Activated CD4-positive, alpha-beta T cell treated with anti-CD3 and anti-CD28 coated beads, Interleukin-2, amount 10 ng/mL, durations not matched to agents 24 days and 14 days (primary cell): ENCODE measurements at regions of chr2 and their contacts with region 1.

Region 1: DNA sequence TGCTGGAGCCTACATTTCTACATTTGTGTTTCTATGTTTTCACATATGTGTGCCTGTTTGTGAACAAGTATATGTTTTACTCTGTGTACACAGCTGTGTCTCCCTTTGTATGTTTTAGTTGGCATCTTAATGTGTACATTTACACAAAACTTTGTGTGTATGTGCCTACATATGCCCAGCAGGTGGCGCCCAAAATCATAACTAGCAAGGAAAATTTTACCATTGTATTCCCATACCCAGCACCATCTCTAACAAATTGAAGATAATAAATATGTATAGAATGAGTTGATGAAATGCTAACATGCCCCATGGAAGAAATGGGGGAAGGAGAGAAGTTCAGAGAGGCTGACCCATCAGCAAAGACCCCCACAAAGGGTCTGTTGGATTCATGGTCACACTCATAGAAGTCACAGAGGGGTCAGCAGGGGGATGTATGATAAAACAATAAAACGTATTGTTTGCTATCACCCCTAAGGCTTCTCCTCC is 48.1 kb downstream of the PKDCC start:
- DNase-seq: peak; percentile 90
- H3K4me3 Mint-ChIP-seq: no peak overlapping the region
- H3K27ac Mint-ChIP-seq: no peak overlapping the region
- H3K4me1 Mint-ChIP-seq: peaks cover 36% of the 10 kb centered on the region
- H3K27me3 Mint-ChIP-seq: peaks cover 26% of the 10 kb centered on the region

Region 2: GRCh38 chr2:42117923-42118753 is 22.2 kb after region 1 on chr2:
- intact Hi-C with region 1: no loop called
- DNase-seq: no peak
- H3K4me3 Mint-ChIP-seq: peak overlapping the region; percentile 6
- H3K27ac Mint-ChIP-seq: peak overlapping the region; percentile 23
- H3K4me1 Mint-ChIP-seq: peaks cover 30% of the 10 kb centered on the region
- H3K27me3 Mint-ChIP-seq: peaks cover 2% of the 10 kb centered on the region

Region 3: DNA sequence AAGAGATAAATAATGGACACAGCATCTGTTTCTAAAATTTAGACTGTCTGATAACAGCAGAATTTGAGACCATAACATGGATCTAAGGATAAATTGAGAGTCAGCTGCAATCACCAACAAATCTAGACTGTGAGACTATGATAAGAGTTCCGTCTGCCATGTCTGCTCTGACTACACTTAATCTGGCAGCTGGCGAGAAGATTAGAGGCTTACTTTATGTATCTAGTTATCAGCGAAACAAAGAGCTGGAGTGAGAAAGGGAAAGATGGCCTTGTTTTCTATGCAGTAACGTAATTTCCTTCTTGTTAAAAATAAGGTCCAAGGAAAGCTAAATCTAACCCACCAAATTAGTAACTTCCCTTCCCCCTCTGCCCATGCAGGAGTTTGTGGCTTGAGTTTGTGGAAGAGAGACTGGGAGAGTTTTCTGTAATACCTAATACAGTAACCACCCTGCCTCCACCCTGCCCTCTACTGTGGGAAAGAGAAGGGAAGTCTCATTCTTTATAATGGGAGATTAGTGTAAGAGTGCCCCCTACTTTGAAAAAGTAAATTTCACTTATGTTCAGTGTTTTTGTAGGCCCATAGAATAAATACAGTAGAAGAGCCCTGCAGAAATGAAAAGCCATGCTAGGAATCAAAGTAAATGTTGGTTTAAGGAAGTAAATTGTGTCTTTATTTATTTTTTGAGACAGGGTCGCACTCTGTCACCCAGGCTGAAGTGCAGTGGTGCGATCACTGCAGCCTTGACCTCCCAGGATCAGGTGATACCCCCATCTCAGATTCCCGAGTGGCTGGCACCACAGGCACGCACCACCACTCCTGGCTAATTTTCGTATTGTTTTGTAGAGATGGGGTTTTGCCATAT is 100.7 kb after region 1 on chr2:
- intact Hi-C with region 1: loop called (anchors 1 kb)
- DNase-seq: peak; percentile 80
- H3K4me3 Mint-ChIP-seq: no peak overlapping the region
- H3K27ac Mint-ChIP-seq: no peak overlapping the region
- H3K4me1 Mint-ChIP-seq: peaks cover 50% of the 10 kb centered on the region
- H3K27me3 Mint-ChIP-seq: no peaks in the 10 kb centered on the region

Region 4: DNA sequence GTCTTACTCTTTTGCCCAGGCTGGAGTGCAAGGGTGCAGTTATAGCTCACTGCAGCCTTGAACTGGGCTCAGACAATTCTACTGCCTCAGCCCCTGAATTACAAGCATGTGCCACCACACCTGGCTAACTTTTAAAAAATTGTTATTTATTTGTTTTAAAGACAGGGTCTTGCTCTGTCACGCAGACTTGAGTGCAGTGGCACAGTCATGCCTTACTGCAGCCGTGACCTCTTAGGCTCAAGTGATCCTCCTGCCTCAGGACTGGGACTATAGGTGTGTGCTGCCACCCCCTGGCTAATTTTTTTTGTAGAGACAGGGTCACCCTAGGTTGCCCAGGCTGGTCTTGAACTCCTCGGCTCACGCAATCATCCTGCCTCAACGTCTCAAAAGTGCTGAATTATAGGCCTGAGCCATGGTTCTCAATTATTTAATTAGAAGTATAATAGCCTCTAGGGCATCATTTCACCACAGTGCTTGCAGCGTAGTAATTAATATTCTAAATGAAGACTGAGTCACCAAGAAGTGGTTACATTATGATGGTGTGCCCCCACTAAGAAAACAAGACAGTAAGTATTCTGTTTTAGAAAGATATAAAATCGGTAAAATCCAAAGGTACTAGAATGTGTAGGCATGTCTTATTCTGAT is 142.8 kb after region 1 on chr2:
- intact Hi-C with region 1: loop called (anchors 1 kb)
- DNase-seq: peak; percentile 72
- H3K4me3 Mint-ChIP-seq: no peak overlapping the region
- H3K27ac Mint-ChIP-seq: no peak overlapping the region
- H3K4me1 Mint-ChIP-seq: peaks cover 24% of the 10 kb centered on the region
- H3K27me3 Mint-ChIP-seq: no peaks in the 10 kb centered on the region

Region 5: DNA sequence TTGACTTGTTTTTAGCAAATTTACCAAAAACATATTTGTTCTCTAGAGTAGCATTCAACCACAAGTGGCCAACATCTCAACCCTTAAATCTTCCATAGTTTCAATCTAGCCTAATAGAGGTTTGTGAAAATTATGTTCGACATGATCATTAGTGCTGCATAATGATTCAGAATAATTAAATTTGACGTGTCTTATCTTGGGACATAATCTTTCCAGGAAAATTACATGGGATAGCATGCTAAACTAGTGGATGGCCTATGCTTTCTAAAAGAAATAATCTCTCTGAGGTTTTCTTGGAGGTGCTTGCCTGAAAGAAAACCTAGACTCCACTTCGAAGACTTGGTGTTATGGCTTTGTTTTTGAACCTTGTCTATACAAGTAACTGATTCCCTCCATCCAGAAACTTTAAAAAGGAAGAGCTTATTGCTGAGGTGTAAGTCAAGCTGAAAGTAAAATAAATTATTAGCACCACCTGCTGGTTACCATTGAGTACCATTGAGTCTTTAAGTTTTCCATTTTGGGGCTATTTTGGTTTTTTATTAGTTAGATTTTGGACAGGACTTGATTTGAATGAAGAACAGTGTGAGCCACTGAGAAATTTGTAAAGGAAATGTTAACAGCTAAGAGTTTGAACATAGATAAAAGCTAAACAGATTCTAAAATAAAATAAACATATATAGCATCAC is 232.3 kb after region 1 on chr2:
- intact Hi-C with region 1: loop called (anchors 2 kb)
- DNase-seq: no peak
- H3K4me3 Mint-ChIP-seq: no peak overlapping the region
- H3K27ac Mint-ChIP-seq: peak overlapping the region; percentile 20
- H3K4me1 Mint-ChIP-seq: peaks cover 14% of the 10 kb centered on the region
- H3K27me3 Mint-ChIP-seq: no peaks in the 10 kb centered on the region